IMR-90 (cell line): ENCODE measurements at regions of chr2 and their contacts with region 1.

Region 1: GRCh38 chr2:43759195-43759594 is 14.6 kb upstream of the DYNC2LI1 start:
- DNase-seq: peak; percentile 73
- ATAC-seq: peak; percentile 81
- H3K4me3 ChIP-seq: no peak overlapping the region
- H3K27ac ChIP-seq: peak overlapping the region; percentile 2; the same call in 1 of the 2 replicates
- H3K4me1 ChIP-seq: peaks cover 6% of the 10 kb centered on the region; the same call in 1 of the 2 replicates
- H3K27me3 ChIP-seq: no peaks in the 10 kb centered on the region
- CTCF ChIP-seq: no peak
- POLR2A ChIP-seq: no peak
- RAD21 ChIP-seq: no peak

Region 2: GRCh38 chr2:43611987-43612894 is 147.0 kb before region 1 on chr2:
- CTCF ChIA-PET with region 1: no interaction called
- POLR2A ChIA-PET with region 1: no interaction called
- dilution Hi-C with region 1: no loop called
- in situ Hi-C with region 1: no loop called
- intact Hi-C with region 1: loop called (anchors 5 kb)
- DNase-seq: peak; percentile 76
- ATAC-seq: peak; percentile 96
- H3K4me3 ChIP-seq: no peak overlapping the region
- H3K27ac ChIP-seq: no peak overlapping the region
- H3K4me1 ChIP-seq: peaks cover 2% of the 10 kb centered on the region; the same call in 1 of the 2 replicates
- H3K27me3 ChIP-seq: peaks cover 3% of the 10 kb centered on the region; the same call in 1 of the 2 replicates
- CTCF ChIP-seq: peak; percentile 84
- POLR2A ChIP-seq: no peak
- RAD21 ChIP-seq: peak; percentile 78

Region 3: GRCh38 chr2:43622931-43623451 is 136.2 kb before region 1 on chr2:
- CTCF ChIA-PET with region 1: no interaction called
- POLR2A ChIA-PET with region 1: no interaction called
- dilution Hi-C with region 1: no loop called
- in situ Hi-C with region 1: no loop called
- intact Hi-C with region 1: no loop called
- DNase-seq: no peak
- ATAC-seq: peak; percentile 54
- H3K4me3 ChIP-seq: no peak overlapping the region
- H3K27ac ChIP-seq: no peak overlapping the region
- H3K4me1 ChIP-seq: no peaks in the 10 kb centered on the region
- H3K27me3 ChIP-seq: peaks cover 10% of the 10 kb centered on the region
- CTCF ChIP-seq: no peak
- POLR2A ChIP-seq: no peak
- RAD21 ChIP-seq: no peak